ENCODE measurements at regions of chr3 and their contacts with region 1.

Region 1: GRCh38 chr3:11140054-11140712 is 14.1 kb upstream of the HRH1 start:
- DNase-seq: peak; percentile 33
- H3K4me3 Mint-ChIP-seq: no peak overlapping the region
- H3K27ac Mint-ChIP-seq: no peak overlapping the region
- H3K4me1 Mint-ChIP-seq: peaks cover 15% of the 10 kb centered on the region
- H3K27me3 Mint-ChIP-seq: peaks cover 19% of the 10 kb centered on the region

Region 2: DNA sequence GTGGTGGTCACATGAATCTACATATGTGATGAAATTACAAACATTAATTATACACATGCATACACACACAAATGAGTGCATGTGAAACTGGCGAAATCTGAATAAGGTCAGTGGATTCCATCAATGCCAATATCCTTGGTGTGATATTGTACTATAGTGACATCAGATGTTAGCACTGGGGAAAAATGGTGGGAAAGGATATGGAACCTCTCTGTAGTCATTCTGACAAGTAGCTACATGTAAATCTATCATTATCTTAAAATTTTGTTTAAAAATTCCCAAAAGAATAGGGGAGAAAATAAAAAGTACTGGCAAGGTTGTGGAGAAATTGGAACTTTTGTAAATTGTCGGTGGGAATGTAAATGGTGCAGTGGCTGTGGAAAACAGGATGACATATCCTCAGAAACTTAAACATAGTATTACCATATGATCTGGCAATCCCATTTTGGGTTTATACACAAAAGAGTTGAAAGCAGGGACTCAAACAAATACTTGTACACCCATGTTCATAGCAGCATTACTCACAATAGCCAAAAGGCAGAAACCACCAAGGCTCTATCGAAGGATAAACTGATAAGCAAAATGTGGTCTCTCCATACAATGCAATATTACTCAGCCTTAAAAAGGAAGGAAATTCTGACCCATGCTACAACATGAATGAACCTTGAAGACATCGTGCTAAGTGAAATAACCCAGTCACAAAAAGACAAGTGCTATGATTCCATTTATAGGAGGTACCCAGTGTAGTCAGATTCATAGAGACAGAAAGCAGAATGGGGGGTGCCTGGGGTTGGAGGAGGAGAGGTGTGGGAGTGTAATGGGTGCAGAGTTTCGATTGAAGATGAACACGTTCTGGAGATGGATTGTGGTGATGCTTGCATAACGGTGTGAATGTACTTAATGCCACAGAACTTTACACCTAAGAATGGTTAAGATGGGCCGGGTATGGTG is 11.2 kb before region 1 on chr3:
- intact Hi-C with region 1: loop called (anchors 1 kb)
- DNase-seq: no peak
- H3K4me3 Mint-ChIP-seq: no peak overlapping the region
- H3K27ac Mint-ChIP-seq: peak overlapping the region; percentile 8
- H3K4me1 Mint-ChIP-seq: peaks cover 7% of the 10 kb centered on the region
- H3K27me3 Mint-ChIP-seq: peaks cover 8% of the 10 kb centered on the region

Region 3: GRCh38 chr3:11445883-11446282 is 305.7 kb after region 1 on chr3:
- intact Hi-C with region 1: no loop called
- DNase-seq: no peak
- H3K4me3 Mint-ChIP-seq: no peak overlapping the region
- H3K27ac Mint-ChIP-seq: no peak overlapping the region
- H3K4me1 Mint-ChIP-seq: peaks cover 6% of the 10 kb centered on the region
- H3K27me3 Mint-ChIP-seq: no peaks in the 10 kb centered on the region